Activated CD4-positive, alpha-beta memory T cell treated with anti-CD3 and anti-CD28 coated beads for 36 hours (primary cell): ENCODE measurements at regions of chr19 and their contacts with region 1.

Region 1: GRCh38 chr19:40305403-40305802 is 20.3 kb upstream of the AKT2 start:
- DNase-seq: peak; percentile 81
- H3K4me3 Mint-ChIP-seq: no peak overlapping the region
- H3K27ac Mint-ChIP-seq: no peak overlapping the region
- H3K4me1 Mint-ChIP-seq: no peaks in the 10 kb centered on the region
- H3K27me3 Mint-ChIP-seq: no peaks in the 10 kb centered on the region

Region 2: DNA sequence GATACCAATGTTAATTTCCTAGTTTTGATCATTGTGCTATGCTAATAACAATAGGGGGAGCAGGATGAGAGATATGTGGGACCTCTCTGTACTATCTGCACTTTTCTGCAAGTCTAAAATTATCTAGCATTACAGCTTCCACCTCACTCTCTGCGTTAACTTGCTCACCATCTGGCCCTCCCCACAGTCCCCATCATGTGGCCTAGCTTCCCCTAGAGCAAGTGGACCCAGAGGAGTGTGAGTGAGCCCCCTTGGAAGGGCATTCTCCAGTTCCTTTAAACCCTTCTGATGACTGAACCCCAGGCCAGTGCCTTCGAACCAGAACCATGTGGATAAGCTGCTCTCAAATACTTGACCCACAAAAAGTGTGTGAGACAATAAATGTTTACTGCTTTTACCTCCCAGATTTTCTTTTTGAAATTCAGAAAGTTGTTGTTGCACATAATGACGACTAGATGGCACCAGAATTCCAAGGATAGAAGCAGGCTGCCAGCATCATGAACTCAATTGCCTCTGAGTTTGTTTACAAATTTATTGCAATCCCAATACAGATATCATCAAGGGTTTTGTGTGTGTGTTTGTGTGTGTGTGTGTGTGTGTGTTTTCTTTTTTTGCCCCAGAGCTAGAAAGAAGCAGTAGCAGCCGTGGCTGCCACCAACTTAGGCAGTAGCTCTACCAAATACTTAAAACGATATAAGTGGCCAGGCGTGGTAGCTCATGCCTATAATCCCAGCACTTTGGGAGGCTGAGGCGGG is 165.7 kb before region 1 on chr19:
- CTCF ChIA-PET with region 1: interaction called, 13 read pairs
- POLR2A ChIA-PET with region 1: no interaction called
- intact Hi-C with region 1: no loop called
- DNase-seq: no peak
- H3K4me3 Mint-ChIP-seq: peak overlapping the region; percentile 28
- H3K27ac Mint-ChIP-seq: peak overlapping the region; percentile 38
- H3K4me1 Mint-ChIP-seq: peaks cover 13% of the 10 kb centered on the region
- H3K27me3 Mint-ChIP-seq: peaks cover 3% of the 10 kb centered on the region

Region 3: GRCh38 chr19:40200341-40201099 is 104.9 kb before region 1 on chr19:
- CTCF ChIA-PET with region 1: no interaction called
- POLR2A ChIA-PET with region 1: no interaction called
- intact Hi-C with region 1: no loop called
- DNase-seq: no peak
- H3K4me3 Mint-ChIP-seq: no peak overlapping the region
- H3K27ac Mint-ChIP-seq: no peak overlapping the region
- H3K4me1 Mint-ChIP-seq: no peaks in the 10 kb centered on the region
- H3K27me3 Mint-ChIP-seq: no peaks in the 10 kb centered on the region

Region 4: DNA sequence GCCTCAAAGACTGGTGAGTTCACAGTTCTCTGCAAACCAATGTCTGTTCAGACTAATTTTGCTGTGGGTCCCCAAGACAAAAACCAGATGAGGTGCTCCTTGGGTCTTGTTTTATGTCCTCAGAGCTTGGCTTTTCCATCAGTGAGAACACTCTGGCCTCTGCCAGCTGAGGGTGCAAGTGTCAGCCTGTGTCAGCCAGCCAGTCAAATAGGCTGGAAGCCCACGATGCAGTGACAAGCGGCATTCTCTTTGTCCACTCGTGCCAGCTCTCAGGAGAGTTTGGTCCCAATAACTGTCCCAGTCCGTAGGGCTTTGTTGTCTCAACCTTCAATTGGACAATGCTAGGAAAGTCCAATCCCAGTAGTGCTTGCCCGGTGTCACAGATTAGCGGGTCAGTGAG is 10.8 kb before region 1 on chr19:
- CTCF ChIA-PET with region 1: interaction called, 11 read pairs
- POLR2A ChIA-PET with region 1: no interaction called
- intact Hi-C with region 1: no loop called
- DNase-seq: no peak
- H3K4me3 Mint-ChIP-seq: no peak overlapping the region
- H3K27ac Mint-ChIP-seq: no peak overlapping the region
- H3K4me1 Mint-ChIP-seq: no peaks in the 10 kb centered on the region
- H3K27me3 Mint-ChIP-seq: no peaks in the 10 kb centered on the region

Region 5: DNA sequence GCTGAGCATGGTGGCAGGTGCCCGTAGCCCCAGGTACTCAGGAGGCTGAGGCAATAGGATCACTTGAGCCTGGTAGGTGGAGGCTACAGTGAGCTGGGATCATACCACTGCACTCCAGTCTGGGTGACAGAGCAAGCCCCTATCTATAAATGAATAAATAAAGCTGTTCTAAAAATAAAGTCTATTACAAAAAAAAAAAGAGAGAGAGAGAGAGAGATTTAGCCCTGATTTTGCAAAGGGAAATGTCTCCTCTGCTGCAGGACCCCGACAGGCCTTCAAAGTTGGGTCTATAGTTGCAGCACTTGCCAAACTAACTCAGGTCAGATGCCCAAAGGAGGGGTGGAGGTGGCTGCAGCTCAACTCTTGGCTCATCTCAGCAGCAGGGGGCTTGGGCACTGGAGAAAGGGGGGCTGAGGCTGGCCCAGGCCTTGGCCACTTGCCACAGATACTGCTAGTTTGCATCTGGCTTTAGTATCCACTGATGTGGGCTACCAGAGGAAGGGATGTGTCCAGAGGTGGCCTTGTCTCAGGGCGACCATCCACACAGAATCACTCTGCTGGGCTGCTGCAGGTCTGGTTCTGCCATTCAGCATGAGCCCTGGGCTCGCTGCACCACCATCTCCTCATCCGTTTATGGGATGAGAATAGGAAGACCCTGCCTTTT is 10.5 kb after region 1 on chr19:
- CTCF ChIA-PET with region 1: interaction called, 18 read pairs
- POLR2A ChIA-PET with region 1: no interaction called
- intact Hi-C with region 1: no loop called
- DNase-seq: no peak
- H3K4me3 Mint-ChIP-seq: no peak overlapping the region
- H3K27ac Mint-ChIP-seq: no peak overlapping the region
- H3K4me1 Mint-ChIP-seq: no peaks in the 10 kb centered on the region
- H3K27me3 Mint-ChIP-seq: no peaks in the 10 kb centered on the region

Region 6: DNA sequence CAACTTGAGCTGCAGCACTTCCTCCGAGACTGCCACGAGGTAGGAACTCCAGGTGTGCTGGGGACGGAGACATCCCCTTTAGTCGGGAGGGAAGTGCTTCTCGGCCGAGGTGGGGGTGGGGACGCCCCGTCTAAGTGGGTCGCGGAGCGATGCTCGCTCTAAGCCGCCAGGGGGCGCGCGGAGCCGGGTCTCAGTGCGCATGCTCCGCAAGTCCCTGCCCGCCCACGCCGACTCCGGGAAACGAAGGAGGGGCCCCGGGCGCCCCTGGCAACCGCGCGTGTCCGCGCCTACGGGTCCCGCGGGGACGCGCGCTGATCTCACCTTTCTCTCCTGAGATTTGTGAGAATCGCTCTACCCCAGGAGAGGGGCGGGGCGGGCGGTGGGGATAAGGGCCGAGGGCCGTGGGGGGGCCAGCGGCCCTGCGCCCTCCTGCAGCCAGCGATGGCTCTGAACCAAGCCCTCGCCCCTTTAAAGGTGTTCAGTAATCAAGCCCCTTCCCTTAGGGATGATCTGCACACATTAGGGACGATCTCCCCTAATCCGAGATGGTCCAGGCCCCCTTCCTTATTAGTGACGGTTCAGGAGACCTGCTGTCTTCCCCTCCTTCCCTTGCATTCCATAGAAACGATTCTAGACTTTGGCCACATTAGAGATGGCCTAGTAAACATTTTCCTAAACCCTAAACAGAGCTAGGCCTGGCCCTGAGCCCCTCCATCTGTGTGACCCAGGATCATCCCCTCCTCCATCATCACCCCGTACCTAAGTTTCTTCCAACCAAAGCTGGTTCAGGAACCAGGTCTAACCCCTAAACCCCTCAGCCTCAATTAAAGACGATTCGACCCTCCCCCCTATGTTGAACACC is 223.9 kb after region 1 on chr19:
- CTCF ChIA-PET with region 1: interaction called, 3 read pairs
- POLR2A ChIA-PET with region 1: no interaction called
- intact Hi-C with region 1: loop called (anchors 10 kb)
- DNase-seq: peak; percentile 94
- H3K4me3 Mint-ChIP-seq: peak overlapping the region; percentile 51
- H3K27ac Mint-ChIP-seq: peak overlapping the region; percentile 4
- H3K4me1 Mint-ChIP-seq: peaks cover 11% of the 10 kb centered on the region
- H3K27me3 Mint-ChIP-seq: peaks cover 18% of the 10 kb centered on the region

Region 7: GRCh38 chr19:40598121-40598917 is 292.9 kb after region 1 on chr19:
- CTCF ChIA-PET with region 1: interaction called, 12 read pairs
- POLR2A ChIA-PET with region 1: no interaction called
- intact Hi-C with region 1: loop called (anchors 2 kb)
- DNase-seq: peak; percentile 92
- H3K4me3 Mint-ChIP-seq: no peak overlapping the region
- H3K27ac Mint-ChIP-seq: no peak overlapping the region
- H3K4me1 Mint-ChIP-seq: peaks cover 54% of the 10 kb centered on the region
- H3K27me3 Mint-ChIP-seq: peaks cover 30% of the 10 kb centered on the region

Region 8: GRCh38 chr19:40640744-40641143 is 335.3 kb after region 1 on chr19:
- CTCF ChIA-PET with region 1: interaction called, 28 read pairs
- POLR2A ChIA-PET with region 1: no interaction called
- intact Hi-C with region 1: no loop called
- DNase-seq: no peak
- H3K4me3 Mint-ChIP-seq: no peak overlapping the region
- H3K27ac Mint-ChIP-seq: no peak overlapping the region
- H3K4me1 Mint-ChIP-seq: no peaks in the 10 kb centered on the region
- H3K27me3 Mint-ChIP-seq: peaks cover 1% of the 10 kb centered on the region